ENCODE measurements at regions of chr2 and their contacts with region 1.

Region 1: DNA sequence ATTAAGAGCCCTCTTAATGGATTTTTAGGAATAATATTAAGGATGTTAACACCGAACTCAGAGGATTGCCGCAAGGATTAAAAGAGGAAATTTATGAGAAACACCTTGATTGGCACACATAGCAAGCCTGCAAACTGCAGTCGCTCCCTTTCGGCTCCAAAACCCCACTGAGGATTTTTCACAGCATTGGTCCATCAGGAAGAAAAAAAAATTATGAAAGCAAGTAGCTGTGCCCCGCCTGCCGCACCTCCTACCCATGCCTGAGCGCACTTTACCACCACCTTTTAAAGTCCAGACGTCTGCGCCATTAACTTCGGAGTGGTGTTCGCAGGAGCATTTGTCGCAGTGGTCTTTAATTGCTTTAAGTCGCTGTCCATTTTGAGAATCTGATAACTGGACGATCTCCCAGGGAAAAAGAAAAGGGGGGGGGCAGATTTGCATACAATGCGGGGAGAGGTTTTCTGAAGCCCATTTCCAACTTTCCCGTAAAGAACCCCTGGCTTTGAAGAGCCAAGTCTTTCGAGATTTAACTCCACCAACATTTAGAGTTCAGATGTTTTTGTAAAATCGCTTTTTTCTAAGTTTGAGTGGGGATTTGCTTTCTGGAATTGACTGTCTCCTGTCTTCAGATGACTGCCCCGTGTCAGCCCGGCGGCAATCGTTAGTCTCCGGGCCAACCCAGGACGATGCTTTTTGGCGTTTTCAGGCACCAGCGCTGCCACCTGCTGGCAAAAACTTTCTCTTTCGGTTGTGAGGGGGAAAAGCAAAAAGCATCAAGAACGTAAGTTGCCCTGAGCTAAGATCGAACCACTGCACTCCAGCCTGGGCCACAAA is 914 bp upstream of the TRABD2A start:
- DNase-seq: peak; percentile 69 to 89 (median 85)
- ATAC-seq: peak; percentile 80
- H3K4me3 ChIP-seq: peak overlapping the region; percentile 80
- H3K4me3 Mint-ChIP-seq: peak overlapping the region; percentile 84 to 99 (median 97)
- H3K27ac ChIP-seq: peak overlapping the region; percentile 89
- H3K27ac Mint-ChIP-seq: peak overlapping the region; percentile 92 to 99 (median 98)
- H3K4me1 ChIP-seq: peaks cover 5 to 20% of the 10 kb centered on the region in 2 donors
- H3K4me1 Mint-ChIP-seq: peaks cover 35 to 65% (median 61%) of the 10 kb centered on the region in 7 donors
- H3K27me3 ChIP-seq: no peaks in the 10 kb centered on the region
- H3K27me3 Mint-ChIP-seq: peaks cover 0 to 3% (median 0%) of the 10 kb centered on the region in 5 donors

Region 2: DNA sequence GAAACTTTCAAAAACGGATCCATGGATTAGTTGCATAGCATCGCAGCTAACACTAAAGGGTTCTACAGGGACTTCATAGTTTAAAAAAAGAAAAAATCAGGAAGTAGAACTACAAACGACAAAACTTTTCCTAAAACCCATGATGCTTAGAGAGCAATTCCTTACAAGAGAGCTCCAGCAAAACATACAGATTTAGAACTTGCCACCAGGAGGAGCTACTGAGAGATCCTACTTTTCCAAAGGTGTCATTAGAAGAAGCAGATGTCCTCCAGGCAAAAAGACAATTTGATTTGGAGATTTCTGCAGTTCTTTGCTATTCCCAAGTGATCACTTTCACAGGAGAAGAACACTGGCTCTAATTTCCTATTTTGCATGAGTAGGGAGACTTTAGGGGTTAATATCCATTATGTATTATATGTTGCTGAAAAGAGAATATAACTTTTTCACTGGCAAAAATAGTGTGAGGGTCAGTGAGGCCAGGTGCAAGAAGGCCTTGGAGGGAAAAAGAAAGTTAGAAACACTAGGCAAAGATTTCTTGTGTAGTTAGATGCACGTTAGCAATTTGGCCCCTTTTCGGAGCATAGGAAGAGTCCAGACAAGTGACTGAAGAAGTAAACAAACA is 858.9 kb before region 1 on chr2:
- CTCF ChIA-PET with region 1: no interaction called
- POLR2A ChIA-PET with region 1: no interaction called
- intact Hi-C with region 1: loop called in 1 of 2 experiments (anchors 10 kb)
- DNase-seq: peak in 4 of 9 donors; percentile 0 to 15 (median 2)
- ATAC-seq: no peak
- H3K4me3 ChIP-seq: no peak overlapping the region
- H3K4me3 Mint-ChIP-seq: no peak overlapping the region
- H3K27ac ChIP-seq: no peak overlapping the region
- H3K27ac Mint-ChIP-seq: no peak overlapping the region
- H3K4me1 ChIP-seq: no peaks in the 10 kb centered on the region
- H3K4me1 Mint-ChIP-seq: no peaks in the 10 kb centered on the region
- H3K27me3 ChIP-seq: no peaks in the 10 kb centered on the region
- H3K27me3 Mint-ChIP-seq: peaks cover 0 to 21% (median 11%) of the 10 kb centered on the region in 5 donors

Region 3: GRCh38 chr2:84516234-84516986 is 365.4 kb before region 1 on chr2 and contains the start of gene DNAH6:
- CTCF ChIA-PET with region 1: no interaction called
- POLR2A ChIA-PET with region 1: interaction called, 4 read pairs
- intact Hi-C with region 1: loop called (anchors 1 kb)
- DNase-seq: peak; percentile 67 to 94 (median 89)
- ATAC-seq: peak; percentile 99
- H3K4me3 ChIP-seq: peak within 1 kb of the TSS; percentile 78
- H3K4me3 Mint-ChIP-seq: peak within 1 kb of the TSS; percentile 79 to 93 (median 90)
- H3K27ac ChIP-seq: peak within 1 kb of the TSS; percentile 75
- H3K27ac Mint-ChIP-seq: peak within 1 kb of the TSS; percentile 66 to 98 (median 93)
- H3K4me1 ChIP-seq: peaks cover 5 to 6% of the 10 kb centered on the region in 2 donors
- H3K4me1 Mint-ChIP-seq: peaks cover 6 to 27% (median 23%) of the 10 kb centered on the region in 7 donors
- H3K27me3 ChIP-seq: no peaks in the 10 kb centered on the region
- H3K27me3 Mint-ChIP-seq: peaks cover 0 to 41% (median 0%) of the 10 kb centered on the region in 5 donors
- total RNA-seq, gene DNAH6: 0.73 to 2.3 (median 1.1) TPM

Region 4: DNA sequence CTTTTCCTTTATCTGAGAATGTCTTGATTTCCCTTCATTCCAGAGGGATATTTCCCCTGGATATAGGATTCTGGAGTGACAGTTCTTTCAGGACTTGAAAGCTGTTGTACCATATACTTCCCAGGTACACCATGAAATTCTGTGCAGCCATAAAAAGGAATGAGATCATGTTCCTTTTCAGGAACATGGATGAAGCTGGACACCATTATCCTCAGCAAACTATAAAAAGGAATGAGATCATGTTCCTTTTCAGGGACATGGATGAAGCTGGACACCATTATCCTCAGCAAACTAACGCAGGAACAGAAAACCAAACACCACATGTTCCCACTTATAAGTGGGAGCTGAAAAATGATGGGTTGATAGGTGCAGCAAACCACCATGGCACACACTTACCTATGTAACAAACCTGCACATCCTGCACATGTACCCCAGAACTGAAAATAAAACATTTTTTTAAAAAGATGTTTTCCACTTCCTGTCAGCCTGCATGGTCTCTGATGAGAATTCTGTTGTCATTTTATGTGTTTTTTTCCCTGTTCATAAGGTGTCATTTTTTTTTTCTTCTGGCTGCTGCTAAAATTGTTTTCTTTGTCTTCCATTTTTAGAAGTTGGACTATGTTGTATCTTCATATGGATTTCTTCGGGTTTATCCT is 232.2 kb before region 1 on chr2:
- CTCF ChIA-PET with region 1: interaction called, 3 read pairs
- POLR2A ChIA-PET with region 1: interaction called, 4 read pairs
- intact Hi-C with region 1: loop called in 1 of 2 experiments (anchors 5 kb)
- DNase-seq: peak in 7 of 9 donors; percentile 16 to 63 (median 49)
- ATAC-seq: no peak
- H3K4me3 ChIP-seq: no peak overlapping the region
- H3K4me3 Mint-ChIP-seq: peak overlapping the region; percentile 27 to 78 (median 58)
- H3K27ac ChIP-seq: no peak overlapping the region
- H3K27ac Mint-ChIP-seq: peak overlapping the region; percentile 2 to 92 (median 78)
- H3K4me1 ChIP-seq: peaks cover 21 to 83% of the 10 kb centered on the region in 2 donors
- H3K4me1 Mint-ChIP-seq: peaks cover 52 to 93% (median 89%) of the 10 kb centered on the region in 7 donors
- H3K27me3 ChIP-seq: no peaks in the 10 kb centered on the region
- H3K27me3 Mint-ChIP-seq: peaks cover 0 to 2% (median 0%) of the 10 kb centered on the region in 5 donors

Region 5: DNA sequence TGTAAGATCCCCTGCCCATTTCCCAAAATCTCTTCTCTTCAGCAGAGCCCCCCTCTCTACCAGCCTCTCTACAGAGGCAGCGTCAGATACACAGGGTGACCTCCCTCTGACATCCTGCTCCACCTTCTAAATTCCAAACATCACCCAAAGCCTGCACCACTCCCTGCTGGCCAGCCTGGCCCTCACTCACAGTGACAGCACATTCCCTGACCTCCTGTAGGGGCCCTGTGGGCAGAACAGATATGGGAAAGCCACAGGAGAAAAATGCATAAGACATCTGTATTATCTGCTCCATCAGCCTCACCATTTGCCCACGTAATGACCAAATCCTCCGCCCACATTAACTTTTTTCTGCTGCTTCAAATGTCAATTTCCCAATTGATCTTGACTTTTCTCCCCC is 41.5 kb before region 1 on chr2:
- CTCF ChIA-PET with region 1: interaction called, 14 read pairs
- POLR2A ChIA-PET with region 1: interaction called, 11 read pairs
- intact Hi-C with region 1: no loop called
- DNase-seq: no peak
- ATAC-seq: peak; percentile 28
- H3K4me3 ChIP-seq: peak overlapping the region; percentile 43
- H3K4me3 Mint-ChIP-seq: peak overlapping the region; percentile 75 to 90 (median 82)
- H3K27ac ChIP-seq: peak overlapping the region; percentile 80
- H3K27ac Mint-ChIP-seq: peak overlapping the region in 8 of 9 donors; percentile 78 to 99 (median 96)
- H3K4me1 ChIP-seq: peaks cover 71 to 95% of the 10 kb centered on the region in 2 donors
- H3K4me1 Mint-ChIP-seq: peaks cover 49 to 97% (median 88%) of the 10 kb centered on the region in 7 donors
- H3K27me3 ChIP-seq: no peaks in the 10 kb centered on the region
- H3K27me3 Mint-ChIP-seq: no peaks in the 10 kb centered on the region

Region 6: GRCh38 chr2:84865181-84865783 is 16.5 kb before region 1 on chr2:
- CTCF ChIA-PET with region 1: interaction called, 9 read pairs
- POLR2A ChIA-PET with region 1: interaction called, 69 read pairs
- intact Hi-C with region 1: loop called (anchors 1 to 2 kb)
- DNase-seq: peak in 5 of 9 donors; percentile 43 to 67 (median 53)
- ATAC-seq: peak; percentile 72
- H3K4me3 ChIP-seq: no peak overlapping the region
- H3K4me3 Mint-ChIP-seq: peak overlapping the region; percentile 32 to 89 (median 74)
- H3K27ac ChIP-seq: peak overlapping the region; percentile 73
- H3K27ac Mint-ChIP-seq: peak overlapping the region; percentile 70 to 99 (median 96)
- H3K4me1 ChIP-seq: peaks cover 12 to 74% of the 10 kb centered on the region in 2 donors
- H3K4me1 Mint-ChIP-seq: peaks cover 51 to 97% (median 91%) of the 10 kb centered on the region in 7 donors
- H3K27me3 ChIP-seq: no peaks in the 10 kb centered on the region
- H3K27me3 Mint-ChIP-seq: no peaks in the 10 kb centered on the region

Region 7: DNA sequence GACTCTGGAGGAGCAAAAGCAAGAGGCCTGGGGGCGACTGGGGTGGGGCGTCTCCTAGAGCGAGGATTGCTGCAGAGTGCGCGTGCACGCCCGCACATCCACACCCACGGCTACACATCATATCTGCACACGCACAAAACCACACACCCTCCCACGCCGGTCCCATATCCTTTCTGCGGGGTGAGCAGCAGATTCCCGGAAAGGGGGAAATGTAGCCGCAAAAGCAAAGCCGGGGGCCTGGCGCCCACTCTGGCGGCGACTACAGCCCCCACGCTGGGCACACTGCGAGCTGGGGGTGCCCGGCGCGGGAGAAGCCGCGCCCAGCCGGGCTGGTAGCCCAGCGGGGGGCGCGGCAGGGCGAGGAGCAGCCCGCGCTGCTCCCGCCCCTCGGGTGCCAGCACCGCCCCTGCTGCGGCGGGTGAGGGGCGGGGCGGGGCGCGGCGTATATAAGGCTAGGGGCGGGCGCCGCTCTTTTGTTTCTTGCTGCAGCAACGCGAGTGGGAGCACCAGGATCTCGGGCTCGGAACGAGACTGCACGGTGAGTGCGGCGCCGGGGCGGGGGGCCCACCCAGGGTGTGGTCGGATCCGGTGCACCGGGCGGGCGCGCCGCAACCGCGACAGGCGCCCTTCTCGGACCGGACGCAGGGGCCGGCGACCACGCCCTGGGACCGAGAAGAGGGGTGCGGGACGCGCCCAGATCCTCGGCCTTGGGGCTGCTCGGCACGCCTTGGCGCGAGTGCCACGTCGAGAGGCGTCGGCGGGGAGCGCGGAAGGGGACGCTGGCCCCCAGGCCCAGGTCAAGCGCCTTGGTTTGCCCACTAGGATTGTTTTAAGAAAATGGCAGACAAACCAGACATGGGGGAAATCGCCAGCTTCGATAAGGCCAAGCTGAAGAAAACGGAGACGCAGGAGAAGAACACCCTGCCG is 23.6 kb after region 1 on chr2 and contains the start of gene TMSB10:
- CTCF ChIA-PET with region 1: interaction called, 23 read pairs
- POLR2A ChIA-PET with region 1: interaction called, 617 read pairs
- intact Hi-C with region 1: loop called (anchors 1 kb)
- DNase-seq: peak; percentile 87 to 98 (median 94)
- ATAC-seq: peak; percentile 88
- H3K4me3 ChIP-seq: peak within 1 kb of the TSS; percentile 89
- H3K4me3 Mint-ChIP-seq: peak within 1 kb of the TSS; percentile 90 to 98 (median 95)
- H3K27ac ChIP-seq: peak within 1 kb of the TSS; percentile 81
- H3K27ac Mint-ChIP-seq: peak within 1 kb of the TSS; percentile 89 to 99 (median 96)
- H3K4me1 ChIP-seq: peaks cover 30 to 34% of the 10 kb centered on the region in 2 donors
- H3K4me1 Mint-ChIP-seq: peaks cover 39 to 73% (median 67%) of the 10 kb centered on the region in 7 donors
- H3K27me3 ChIP-seq: no peaks in the 10 kb centered on the region
- H3K27me3 Mint-ChIP-seq: peaks cover 0 to 2% (median 0%) of the 10 kb centered on the region in 5 donors
- total RNA-seq, gene TMSB10: 1,492 to 5,756 (median 1,578) TPM

Region 8: GRCh38 chr2:85106507-85107215 is 224.9 kb after region 1 on chr2:
- CTCF ChIA-PET with region 1: no interaction called
- POLR2A ChIA-PET with region 1: no interaction called
- intact Hi-C with region 1: no loop called
- DNase-seq: no peak
- ATAC-seq: no peak
- H3K4me3 ChIP-seq: no peak overlapping the region
- H3K4me3 Mint-ChIP-seq: no peak overlapping the region
- H3K27ac ChIP-seq: no peak overlapping the region
- H3K27ac Mint-ChIP-seq: no peak overlapping the region
- H3K4me1 ChIP-seq: no peaks in the 10 kb centered on the region
- H3K4me1 Mint-ChIP-seq: no peaks in the 10 kb centered on the region
- H3K27me3 ChIP-seq: no peaks in the 10 kb centered on the region
- H3K27me3 Mint-ChIP-seq: peaks cover 5 to 13% (median 10%) of the 10 kb centered on the region in 5 donors